ENCODE measurements at regions of chr5 and their contacts with region 1.

Region 1: GRCh38 chr5:134140530-134141201 is 26.2 kb downstream of the TCF7 start:
- DNase-seq: peak; percentile 81
- H3K4me3 Mint-ChIP-seq: no peak overlapping the region
- H3K27ac Mint-ChIP-seq: no peak overlapping the region
- H3K4me1 Mint-ChIP-seq: peaks cover 57% of the 10 kb centered on the region
- H3K27me3 Mint-ChIP-seq: no peaks in the 10 kb centered on the region

Region 2: DNA sequence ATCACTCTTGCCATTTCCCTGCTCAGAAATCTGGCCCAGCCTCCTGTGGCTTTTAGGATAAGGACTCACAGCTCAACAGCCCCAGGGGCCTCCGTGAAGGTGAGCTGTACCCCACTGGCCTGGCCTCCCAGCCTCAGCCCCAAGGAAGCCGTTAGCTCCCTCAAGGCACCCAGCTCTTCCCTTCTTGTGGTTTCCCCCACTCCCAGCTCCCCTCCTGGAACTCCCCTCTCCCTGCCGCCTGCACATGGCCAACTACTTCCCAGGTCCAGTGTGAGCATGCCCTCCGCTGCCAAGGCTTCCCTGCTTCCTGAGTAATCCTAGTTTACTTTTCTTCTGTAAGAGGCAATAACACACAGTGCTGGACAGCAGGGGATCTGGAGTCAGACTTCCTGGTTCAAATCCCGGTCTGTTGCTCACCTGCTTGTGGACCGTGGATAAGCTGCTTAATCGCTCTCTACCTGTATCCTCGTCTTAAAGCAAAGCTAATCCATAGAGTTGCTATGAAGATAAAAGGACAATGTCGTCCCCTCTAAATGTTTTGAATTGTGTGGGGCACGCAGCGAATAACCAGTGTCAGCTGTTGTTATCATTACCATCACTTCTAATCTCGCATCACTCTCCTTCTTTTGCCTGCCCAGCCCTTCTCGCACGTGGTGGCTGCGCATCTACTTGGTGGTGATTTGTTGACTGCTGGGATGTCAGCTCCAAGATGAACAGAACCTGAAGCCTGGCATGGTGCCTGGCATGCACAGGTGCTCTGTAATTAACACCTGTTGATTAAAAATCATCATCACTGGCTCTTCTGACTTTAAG is 258.9 kb before region 1 on chr5:
- CTCF ChIA-PET with region 1: no interaction called
- POLR2A ChIA-PET with region 1: no interaction called
- intact Hi-C with region 1: no loop called
- DNase-seq: no peak
- H3K4me3 Mint-ChIP-seq: no peak overlapping the region
- H3K27ac Mint-ChIP-seq: no peak overlapping the region
- H3K4me1 Mint-ChIP-seq: peaks cover 5% of the 10 kb centered on the region
- H3K27me3 Mint-ChIP-seq: peaks cover 4% of the 10 kb centered on the region

Region 3: GRCh38 chr5:134070725-134071613 is 69.7 kb before region 1 on chr5:
- CTCF ChIA-PET with region 1: interaction called, 35 read pairs
- POLR2A ChIA-PET with region 1: interaction called, 8 read pairs
- intact Hi-C with region 1: loop called (anchors 1 kb)
- DNase-seq: peak; percentile 58
- H3K4me3 Mint-ChIP-seq: peak overlapping the region; percentile 77
- H3K27ac Mint-ChIP-seq: peak overlapping the region; percentile 92
- H3K4me1 Mint-ChIP-seq: peaks cover 63% of the 10 kb centered on the region
- H3K27me3 Mint-ChIP-seq: no peaks in the 10 kb centered on the region

Region 4: DNA sequence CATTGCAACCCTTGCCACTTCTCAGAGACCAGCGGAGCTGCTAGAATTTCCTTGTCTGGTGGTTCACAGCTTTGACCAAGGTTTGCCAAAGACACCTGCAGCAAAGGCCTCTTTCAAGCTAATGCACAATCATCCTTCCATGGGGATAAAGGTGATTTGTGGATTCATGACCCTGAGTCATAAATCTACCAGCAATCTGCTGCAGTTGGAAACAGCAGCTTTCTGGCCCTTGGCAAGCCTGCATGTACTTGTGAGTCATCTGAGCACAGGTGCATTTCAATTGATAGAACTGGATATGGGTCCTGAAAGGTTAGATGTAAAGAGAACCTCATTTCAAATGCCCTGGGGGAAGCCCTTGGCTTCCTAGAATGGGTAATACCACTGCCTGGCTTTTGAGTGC is 47.8 kb before region 1 on chr5:
- CTCF ChIA-PET with region 1: interaction called, 23 read pairs
- POLR2A ChIA-PET with region 1: no interaction called
- intact Hi-C with region 1: no loop called
- DNase-seq: no peak
- H3K4me3 Mint-ChIP-seq: no peak overlapping the region
- H3K27ac Mint-ChIP-seq: no peak overlapping the region
- H3K4me1 Mint-ChIP-seq: peaks cover 73% of the 10 kb centered on the region
- H3K27me3 Mint-ChIP-seq: peaks cover 2% of the 10 kb centered on the region

Region 5: DNA sequence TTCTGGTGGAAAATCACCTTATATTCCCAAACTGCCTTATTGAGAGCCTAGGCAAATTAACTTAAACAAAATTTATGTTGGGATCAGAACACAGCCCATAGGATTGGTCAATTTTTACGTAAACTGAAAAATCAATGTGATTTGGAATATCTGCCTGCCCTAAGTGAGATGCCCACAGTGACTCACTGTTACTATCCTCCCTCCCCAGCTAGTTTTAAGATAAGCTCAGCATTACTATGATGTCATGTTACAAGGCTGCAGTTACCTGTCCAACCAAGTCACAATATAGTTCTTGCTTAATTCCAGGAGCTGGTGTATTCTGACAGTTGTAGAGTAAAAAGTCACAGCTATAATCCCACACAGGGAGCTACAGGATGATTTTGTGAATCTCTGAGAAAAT is 13.0 kb after region 1 on chr5:
- CTCF ChIA-PET with region 1: interaction called, 28 read pairs
- POLR2A ChIA-PET with region 1: interaction called, 8 read pairs
- intact Hi-C with region 1: no loop called
- DNase-seq: no peak
- H3K4me3 Mint-ChIP-seq: no peak overlapping the region
- H3K27ac Mint-ChIP-seq: peak overlapping the region; percentile 52
- H3K4me1 Mint-ChIP-seq: peaks cover 58% of the 10 kb centered on the region
- H3K27me3 Mint-ChIP-seq: no peaks in the 10 kb centered on the region

Region 6: GRCh38 chr5:134176511-134177368 is 36.1 kb after region 1 on chr5 and contains the start of gene SKP1:
- CTCF ChIA-PET with region 1: interaction called, 7 read pairs
- POLR2A ChIA-PET with region 1: interaction called, 10 read pairs
- intact Hi-C with region 1: no loop called
- DNase-seq: peak; percentile 88
- H3K4me3 Mint-ChIP-seq: peak within 1 kb of the TSS; percentile 95
- H3K27ac Mint-ChIP-seq: peak within 1 kb of the TSS; percentile 96
- H3K4me1 Mint-ChIP-seq: peaks cover 33% of the 10 kb centered on the region
- H3K27me3 Mint-ChIP-seq: no peaks in the 10 kb centered on the region
- total RNA-seq, gene SKP1: 284 to 286 TPM

Region 7: GRCh38 chr5:134784241-134784920 is 643.7 kb after region 1 on chr5:
- CTCF ChIA-PET with region 1: no interaction called
- POLR2A ChIA-PET with region 1: no interaction called
- intact Hi-C with region 1: no loop called
- DNase-seq: no peak
- H3K4me3 Mint-ChIP-seq: no peak overlapping the region
- H3K27ac Mint-ChIP-seq: no peak overlapping the region
- H3K4me1 Mint-ChIP-seq: no peaks in the 10 kb centered on the region
- H3K27me3 Mint-ChIP-seq: no peaks in the 10 kb centered on the region